ENCODE measurements at regions of chr2 and their contacts with region 1.

Region 1: GRCh38 chr2:236569573-236569973 is at the start of gene ACKR3:
- DNase-seq: peak; percentile 47
- ATAC-seq: peak; percentile 89
- H3K4me3 Mint-ChIP-seq: peak within 1 kb of the TSS; percentile 86
- H3K27ac Mint-ChIP-seq: peak within 1 kb of the TSS; percentile 73
- H3K4me1 Mint-ChIP-seq: peaks cover 48% of the 10 kb centered on the region
- H3K27me3 Mint-ChIP-seq: no peaks in the 10 kb centered on the region
- CTCF ChIP-seq: no peak
- total RNA-seq, gene ACKR3: 5.8 and 6.6 TPM in 2 replicates

Region 2: GRCh38 chr2:236402033-236402790 is 167.4 kb before region 1 on chr2:
- CTCF ChIA-PET with region 1: interaction called, 9 read pairs
- POLR2A ChIA-PET with region 1: interaction called, 4 read pairs
- intact Hi-C with region 1: loop called (anchors 1 kb)
- DNase-seq: peak; percentile 58
- ATAC-seq: peak; percentile 99
- H3K4me3 Mint-ChIP-seq: peak overlapping the region; percentile 66
- H3K27ac Mint-ChIP-seq: no peak overlapping the region
- H3K4me1 Mint-ChIP-seq: peaks cover 19% of the 10 kb centered on the region
- H3K27me3 Mint-ChIP-seq: peaks cover 5% of the 10 kb centered on the region
- CTCF ChIP-seq: no peak

Region 3: DNA sequence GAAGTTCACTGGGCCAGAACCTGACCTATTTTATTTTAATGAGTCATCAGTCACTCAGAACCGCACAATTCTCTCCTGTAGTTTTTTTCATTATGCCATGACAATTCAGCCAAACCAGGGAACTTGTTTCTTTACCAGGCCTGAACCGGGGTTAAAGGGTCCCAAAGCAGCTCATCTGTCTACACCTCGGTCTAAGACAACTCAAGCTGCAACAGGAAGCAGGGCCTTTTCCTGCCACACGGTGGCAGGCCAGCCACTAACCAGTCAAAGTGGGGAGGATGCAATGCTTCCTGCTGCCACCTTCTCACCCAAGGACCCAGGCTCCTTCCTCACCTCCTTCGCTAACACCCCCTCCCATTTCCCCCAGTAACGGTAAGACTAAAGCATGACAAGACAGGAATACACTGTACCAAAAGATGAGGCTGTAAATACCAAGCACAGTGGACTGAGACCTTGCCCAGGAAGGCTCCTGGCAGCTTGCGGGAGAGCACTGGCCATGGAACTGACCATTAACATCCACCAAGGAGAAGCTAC is 56.6 kb before region 1 on chr2:
- CTCF ChIA-PET with region 1: interaction called, 264 read pairs
- POLR2A ChIA-PET with region 1: interaction called, 40 read pairs
- intact Hi-C with region 1: loop called (anchors 1 kb)
- DNase-seq: peak; percentile 53
- ATAC-seq: peak; percentile 98
- H3K4me3 Mint-ChIP-seq: no peak overlapping the region
- H3K27ac Mint-ChIP-seq: no peak overlapping the region
- H3K4me1 Mint-ChIP-seq: peaks cover 7% of the 10 kb centered on the region
- H3K27me3 Mint-ChIP-seq: peaks cover 2% of the 10 kb centered on the region
- CTCF ChIP-seq: no peak

Region 4: GRCh38 chr2:236545814-236546480 is 23.6 kb before region 1 on chr2:
- CTCF ChIA-PET with region 1: interaction called, 43 read pairs
- POLR2A ChIA-PET with region 1: interaction called, 90 read pairs
- intact Hi-C with region 1: loop called (anchors 1 kb)
- DNase-seq: no peak
- ATAC-seq: peak; percentile 57
- H3K4me3 Mint-ChIP-seq: peak overlapping the region; percentile 78
- H3K27ac Mint-ChIP-seq: peak overlapping the region; percentile 98
- H3K4me1 Mint-ChIP-seq: peaks cover 78% of the 10 kb centered on the region
- H3K27me3 Mint-ChIP-seq: no peaks in the 10 kb centered on the region
- CTCF ChIP-seq: no peak

Region 5: DNA sequence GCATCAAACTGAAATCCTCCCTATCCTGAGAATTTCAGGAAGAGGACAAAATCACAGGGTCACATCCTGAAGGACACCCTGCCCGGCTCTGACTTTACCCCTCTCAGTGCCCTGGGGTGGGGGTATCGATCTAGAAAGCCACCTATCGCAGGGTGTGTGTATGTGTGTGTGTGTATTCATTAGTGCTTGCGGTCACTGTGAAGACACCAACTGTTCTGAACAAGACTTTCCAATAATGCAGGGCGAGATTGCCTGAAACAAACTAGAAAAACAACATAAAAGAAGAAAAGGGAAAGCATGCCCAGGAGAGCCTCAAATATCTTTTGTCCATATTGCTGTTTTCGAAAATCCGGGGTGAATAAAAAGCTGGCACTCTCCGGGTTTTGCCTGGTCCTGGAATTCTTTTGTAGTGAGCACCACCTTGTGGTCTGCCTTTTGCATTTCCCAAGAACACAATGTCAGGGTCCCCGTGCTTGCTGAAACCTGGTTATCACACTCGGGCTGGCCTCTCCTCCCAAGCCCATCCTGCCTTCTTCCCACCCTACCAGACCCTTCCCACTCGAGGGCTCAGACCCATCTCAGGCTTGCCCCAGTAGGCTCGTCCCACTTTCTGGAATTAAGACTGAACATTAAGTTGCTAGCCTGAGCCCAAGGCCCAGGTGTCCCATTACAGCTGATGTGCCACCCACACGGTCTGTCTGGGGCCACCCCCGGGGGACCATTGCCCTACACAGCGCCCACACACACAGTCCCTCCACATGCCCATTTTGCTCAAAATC is 491.1 kb after region 1 on chr2:
- CTCF ChIA-PET with region 1: interaction called, 13 read pairs
- POLR2A ChIA-PET with region 1: interaction called, 3 read pairs
- intact Hi-C with region 1: loop called (anchors 1 kb)
- DNase-seq: no peak
- ATAC-seq: no peak
- H3K4me3 Mint-ChIP-seq: no peak overlapping the region
- H3K27ac Mint-ChIP-seq: no peak overlapping the region
- H3K4me1 Mint-ChIP-seq: peaks cover 37% of the 10 kb centered on the region
- H3K27me3 Mint-ChIP-seq: no peaks in the 10 kb centered on the region
- CTCF ChIP-seq: no peak

Region 6: DNA sequence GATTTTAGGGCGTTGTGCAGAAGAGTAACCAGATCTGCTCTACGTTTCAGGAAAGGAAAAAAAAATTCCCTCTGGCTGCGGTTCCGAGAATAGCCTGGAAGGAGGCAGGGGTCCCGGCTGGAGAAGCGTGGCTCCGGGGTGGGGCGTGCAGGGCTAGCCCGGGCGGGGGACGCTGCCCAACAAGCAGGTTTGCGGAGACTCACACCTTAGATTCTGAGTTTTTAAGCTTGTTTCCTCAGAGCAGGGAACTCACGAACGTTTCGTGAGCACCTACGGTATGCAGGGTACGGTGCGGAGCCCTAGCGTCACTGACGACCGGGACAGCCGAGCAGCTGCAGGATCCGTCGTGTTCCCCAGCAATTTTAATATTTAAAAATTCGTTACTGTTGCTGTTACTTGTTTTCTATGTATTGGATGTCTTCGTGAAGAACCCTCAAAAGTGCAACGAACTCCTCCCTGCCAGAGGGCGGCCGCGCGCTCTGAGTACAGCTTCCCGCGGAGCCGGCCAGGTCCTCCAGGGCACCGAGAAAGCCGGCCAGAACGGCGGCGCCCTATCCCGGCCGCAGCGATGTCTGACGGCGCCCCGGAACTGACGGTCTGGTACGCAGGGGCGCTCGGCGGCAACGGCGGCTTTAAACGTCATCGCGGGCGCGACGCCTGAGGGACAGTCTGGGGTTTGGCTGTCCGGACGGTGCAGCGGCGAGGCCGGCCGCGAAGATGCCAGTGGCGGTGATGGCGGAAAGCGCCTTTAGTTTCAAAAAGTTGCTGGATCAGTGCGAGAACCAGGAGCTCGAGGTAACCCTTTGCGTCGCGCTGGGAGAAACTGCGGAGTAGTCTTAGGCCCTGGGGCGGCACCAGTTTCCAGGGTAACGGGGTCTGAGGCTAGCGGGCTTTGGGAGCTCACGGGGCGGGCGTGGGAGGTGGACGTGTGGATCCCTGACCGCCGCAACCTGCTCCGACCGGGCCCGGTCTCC is 516.0 kb after region 1 on chr2 and contains the start of gene COPS8:
- CTCF ChIA-PET with region 1: no interaction called
- POLR2A ChIA-PET with region 1: interaction called, 20 read pairs
- intact Hi-C with region 1: no loop called
- DNase-seq: peak; percentile 86
- ATAC-seq: peak; percentile 97
- H3K4me3 Mint-ChIP-seq: peak within 1 kb of the TSS; percentile 100
- H3K27ac Mint-ChIP-seq: peak within 1 kb of the TSS; percentile 97
- H3K4me1 Mint-ChIP-seq: peaks cover 23% of the 10 kb centered on the region
- H3K27me3 Mint-ChIP-seq: no peaks in the 10 kb centered on the region
- CTCF ChIP-seq: no peak
- total RNA-seq, gene COPS8: 31.8 and 35.1 TPM in 2 replicates